ENCODE measurements at regions of chr5 and their contacts with region 1.

Region 1: GRCh38 chr5:57324181-57324580 is 150.3 kb downstream of the GPBP1 start:
- DNase-seq: no peak
- H3K4me3 ChIP-seq: no peak overlapping the region
- H3K27ac ChIP-seq: no peak overlapping the region; a peak in 1 of 4 replicates
- H3K4me1 ChIP-seq: no peaks in the 10 kb centered on the region
- H3K27me3 ChIP-seq: no peaks in the 10 kb centered on the region
- CTCF ChIP-seq: no peak
- EP300 ChIP-seq: no peak
- RAD21 ChIP-seq: no peak

Region 2: DNA sequence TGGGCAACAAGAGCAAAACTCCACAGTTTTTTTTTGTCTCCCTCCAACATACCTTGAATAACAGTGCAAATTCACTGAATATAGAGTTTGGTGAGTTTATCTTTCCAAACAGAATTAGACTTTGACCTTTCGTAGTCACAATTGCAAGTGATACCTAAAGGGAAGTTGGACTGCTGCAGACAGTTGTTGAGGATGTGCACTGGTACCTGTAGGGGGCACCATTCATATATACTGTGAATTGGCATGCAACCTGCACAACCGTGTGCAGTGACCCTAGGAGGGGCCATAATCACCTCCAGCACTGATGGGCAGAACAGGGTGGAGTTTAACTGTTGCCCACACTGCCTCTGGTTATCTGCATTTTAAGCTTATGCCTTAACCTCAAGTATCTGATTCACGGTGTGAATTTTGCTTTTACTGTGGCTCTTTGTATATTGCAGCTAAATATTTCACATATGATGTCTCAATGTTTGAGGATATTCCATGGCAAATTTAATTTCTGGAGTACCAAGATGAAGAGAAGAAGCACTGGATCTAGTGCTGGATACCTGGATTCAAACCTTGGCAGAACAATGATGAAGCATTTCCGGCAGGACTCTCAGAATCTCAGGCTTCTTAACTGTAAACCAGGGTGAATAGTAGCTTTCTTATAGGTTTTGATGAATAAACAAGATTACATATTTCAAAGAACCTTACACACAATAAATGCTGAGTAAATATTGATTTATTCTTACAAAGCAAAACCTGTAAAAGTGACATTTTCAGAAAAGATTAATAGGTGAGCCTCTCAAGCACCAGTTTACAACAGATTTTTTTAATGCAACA is 14.1 kb after region 1 on chr5:
- CTCF ChIA-PET with region 1: interaction called, 14 read pairs
- POLR2A ChIA-PET with region 1: no interaction called
- DNase-seq: peak; percentile 33
- H3K4me3 ChIP-seq: no peak overlapping the region
- H3K27ac ChIP-seq: no peak overlapping the region
- H3K4me1 ChIP-seq: no peaks in the 10 kb centered on the region
- H3K27me3 ChIP-seq: no peaks in the 10 kb centered on the region
- CTCF ChIP-seq: peak; percentile 60
- EP300 ChIP-seq: no peak
- RAD21 ChIP-seq: peak; percentile 78